Caco-2 (cell line): ENCODE measurements at regions of chr1 and their contacts with region 1.

Region 1: DNA sequence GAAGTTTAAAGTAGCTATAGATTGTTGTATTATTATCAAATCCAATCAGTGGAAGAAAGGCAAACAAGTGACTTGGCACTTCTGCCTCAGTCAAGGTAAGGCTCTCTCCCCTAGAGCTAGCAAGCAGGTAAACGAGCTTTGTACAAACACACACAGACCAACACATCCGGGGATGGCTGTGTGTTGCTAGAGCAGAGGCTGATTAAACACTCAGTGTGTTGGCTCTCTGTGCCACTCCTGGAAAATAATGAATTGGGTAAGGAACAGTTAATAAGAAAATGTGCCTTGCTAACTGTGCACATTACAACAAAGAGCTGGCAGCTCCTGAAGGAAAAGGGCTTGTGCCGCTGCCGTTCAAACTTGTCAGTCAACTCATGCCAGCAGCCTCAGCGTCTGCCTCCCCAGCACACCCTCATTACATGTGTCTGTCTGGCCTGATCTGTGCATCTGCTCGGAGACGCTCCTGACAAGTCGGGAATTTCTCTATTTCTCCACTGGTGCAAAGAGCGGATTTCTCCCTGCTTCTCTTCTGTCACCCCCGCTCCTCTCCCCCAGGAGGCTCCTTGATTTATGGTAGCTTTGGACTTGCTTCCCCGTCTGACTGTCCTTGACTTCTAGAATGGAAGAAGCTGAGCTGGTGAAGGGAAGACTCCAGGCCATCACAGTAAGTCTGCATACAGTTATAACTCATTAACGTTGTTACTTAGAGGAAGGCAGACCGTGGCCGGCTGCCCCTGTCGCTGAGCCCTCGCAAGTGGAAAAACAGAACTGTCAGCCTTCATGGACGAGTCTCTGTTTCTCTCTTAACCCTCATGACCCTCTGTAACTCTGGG is at the start of gene PALMD:
- DNase-seq: peak in 1 of 2 experiments; percentile 3
- H3K4me3 ChIP-seq: peak within 1 kb of the TSS; percentile 1; the same call in 1 of the 2 replicates
- H3K4me3 Mint-ChIP-seq: peak within 1 kb of the TSS; percentile 70
- H3K27ac Mint-ChIP-seq: peak within 1 kb of the TSS; percentile 68
- H3K4me1 ChIP-seq: no peaks in the 10 kb centered on the region
- H3K4me1 Mint-ChIP-seq: peaks cover 6% of the 10 kb centered on the region
- H3K27me3 ChIP-seq: no peaks in the 10 kb centered on the region
- H3K27me3 Mint-ChIP-seq: no peaks in the 10 kb centered on the region
- CTCF ChIP-seq: no peak
- total RNA-seq, gene PALMD: 0.28 TPM in 1 of 2 replicates, not detected in the other

Region 2: GRCh38 chr1:99348397-99349132 is 297.4 kb before region 1 on chr1:
- CTCF ChIA-PET with region 1: no interaction called
- POLR2A ChIA-PET with region 1: no interaction called
- intact Hi-C with region 1: no loop called
- DNase-seq: no peak
- H3K4me3 ChIP-seq: no peak overlapping the region
- H3K4me3 Mint-ChIP-seq: no peak overlapping the region
- H3K27ac Mint-ChIP-seq: no peak overlapping the region
- H3K4me1 ChIP-seq: no peaks in the 10 kb centered on the region
- H3K4me1 Mint-ChIP-seq: no peaks in the 10 kb centered on the region
- H3K27me3 ChIP-seq: no peaks in the 10 kb centered on the region
- H3K27me3 Mint-ChIP-seq: no peaks in the 10 kb centered on the region
- CTCF ChIP-seq: no peak

Region 3: GRCh38 chr1:99526926-99527477 is 118.9 kb before region 1 on chr1:
- CTCF ChIA-PET with region 1: no interaction called
- POLR2A ChIA-PET with region 1: no interaction called
- intact Hi-C with region 1: loop called (anchors 10 kb)
- DNase-seq: no peak
- H3K4me3 ChIP-seq: no peak overlapping the region
- H3K4me3 Mint-ChIP-seq: no peak overlapping the region
- H3K27ac Mint-ChIP-seq: no peak overlapping the region
- H3K4me1 ChIP-seq: no peaks in the 10 kb centered on the region
- H3K4me1 Mint-ChIP-seq: no peaks in the 10 kb centered on the region
- H3K27me3 ChIP-seq: no peaks in the 10 kb centered on the region
- H3K27me3 Mint-ChIP-seq: no peaks in the 10 kb centered on the region
- CTCF ChIP-seq: peak in 1 of 2 experiments; percentile 26

Region 4: DNA sequence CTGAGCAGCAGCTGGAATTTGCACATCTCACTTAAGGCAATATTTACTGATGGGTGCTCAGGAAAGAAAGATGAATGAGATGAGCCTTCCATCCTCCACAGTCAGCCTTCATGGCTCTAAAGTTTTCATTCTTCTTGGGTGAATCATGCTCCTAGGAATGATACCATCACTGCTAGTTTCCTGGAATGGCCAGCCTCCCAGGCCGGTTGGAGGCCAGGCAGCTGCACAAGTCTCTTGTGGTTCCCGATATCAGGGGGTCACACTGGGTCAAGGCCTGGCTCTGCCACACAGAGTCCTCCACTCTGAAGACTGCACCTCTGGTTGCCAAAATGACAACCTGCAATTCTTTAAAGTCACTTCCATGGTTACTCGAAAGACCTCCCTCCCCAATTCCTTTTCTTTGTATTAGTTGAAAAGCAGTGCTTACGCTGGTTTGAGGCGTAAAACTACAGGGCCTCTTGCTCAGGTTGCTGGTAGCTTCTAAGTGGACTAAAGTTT is 46.2 kb before region 1 on chr1:
- CTCF ChIA-PET with region 1: no interaction called
- POLR2A ChIA-PET with region 1: no interaction called
- intact Hi-C with region 1: no loop called
- DNase-seq: peak; percentile 6 to 52
- H3K4me3 ChIP-seq: no peak overlapping the region
- H3K4me3 Mint-ChIP-seq: no peak overlapping the region
- H3K27ac Mint-ChIP-seq: no peak overlapping the region
- H3K4me1 ChIP-seq: 0 out of 2 replicates have a peak, but pooled peaks cover 4% of the 10 kb centered on the region
- H3K4me1 Mint-ChIP-seq: no peaks in the 10 kb centered on the region
- H3K27me3 ChIP-seq: no peaks in the 10 kb centered on the region
- H3K27me3 Mint-ChIP-seq: no peaks in the 10 kb centered on the region
- CTCF ChIP-seq: no peak

Region 5: DNA sequence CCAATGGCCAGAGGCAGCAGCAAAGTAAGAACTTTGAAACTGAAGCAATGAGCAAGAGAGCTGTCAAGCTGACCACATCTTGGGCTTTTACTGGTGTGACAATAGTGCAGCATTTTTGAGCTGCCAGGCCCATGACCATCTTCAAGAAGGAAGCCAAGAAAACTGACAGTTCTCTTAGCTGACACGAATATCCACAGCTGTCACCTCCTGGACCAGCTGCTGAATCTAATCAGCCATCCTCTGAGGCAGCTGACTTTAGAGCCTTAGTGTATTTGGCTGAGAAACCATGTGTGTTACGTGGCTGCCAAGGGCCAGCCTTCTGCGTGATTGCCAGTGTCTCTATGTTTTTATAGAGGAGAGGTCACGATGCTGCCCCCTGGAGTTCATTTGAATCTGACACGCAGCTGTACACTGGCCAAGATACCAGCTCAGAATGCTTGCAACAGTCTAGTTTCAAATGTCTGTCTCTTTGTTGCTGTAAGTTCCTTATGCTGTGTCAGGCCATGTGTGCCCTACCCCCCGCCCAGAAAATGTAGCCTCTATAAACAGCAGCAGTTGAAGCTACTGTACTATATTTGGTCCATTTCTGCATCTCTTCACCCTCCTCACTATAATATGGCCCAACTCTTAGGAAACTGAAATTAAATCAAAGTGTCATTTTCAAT is 39.7 kb after region 1 on chr1:
- CTCF ChIA-PET with region 1: no interaction called
- POLR2A ChIA-PET with region 1: no interaction called
- intact Hi-C with region 1: no loop called
- DNase-seq: peak; percentile 47 to 60
- H3K4me3 ChIP-seq: no peak overlapping the region
- H3K4me3 Mint-ChIP-seq: no peak overlapping the region
- H3K27ac Mint-ChIP-seq: no peak overlapping the region
- H3K4me1 ChIP-seq: no peaks in the 10 kb centered on the region
- H3K4me1 Mint-ChIP-seq: no peaks in the 10 kb centered on the region
- H3K27me3 ChIP-seq: no peaks in the 10 kb centered on the region
- H3K27me3 Mint-ChIP-seq: no peaks in the 10 kb centered on the region
- CTCF ChIP-seq: peak; percentile 46 to 47